Activated B cell treated with CpG ODN at 0.5 μM for 24 hours (primary cell): ENCODE measurements at regions of chr1 and their contacts with region 1.

Region 1: DNA sequence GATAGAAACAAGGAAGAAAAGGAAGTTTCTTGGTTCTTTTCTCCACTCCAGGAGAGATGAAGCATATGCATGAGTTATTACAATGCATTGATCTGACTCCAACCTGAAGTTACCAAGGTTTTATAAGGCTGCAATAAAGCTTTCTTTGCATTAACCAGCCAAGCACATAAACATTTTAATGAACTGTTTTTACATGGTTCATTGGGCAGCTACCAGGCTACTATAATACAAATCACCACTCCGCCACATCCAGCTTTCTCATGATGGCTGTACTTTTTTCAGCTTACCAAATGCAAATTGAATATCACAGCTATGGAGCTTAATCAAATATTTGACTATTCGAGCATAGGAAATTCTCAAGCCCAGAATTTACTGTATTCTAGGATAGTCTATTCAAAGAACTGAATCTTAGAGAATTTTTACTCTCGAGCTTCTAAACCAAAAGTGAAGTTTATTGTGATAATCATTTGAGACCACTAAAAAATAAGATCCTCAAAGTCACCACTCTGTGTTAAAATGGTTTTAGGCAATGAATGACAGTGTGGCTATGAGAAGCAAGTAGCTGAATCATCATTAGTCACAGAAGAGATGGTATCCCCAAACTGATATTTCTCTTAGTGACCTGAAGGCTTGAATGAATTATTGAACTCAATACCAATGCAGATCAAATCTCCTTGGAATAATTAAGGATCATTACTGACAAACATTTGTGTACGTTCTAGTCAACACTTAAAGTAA is 58.6 kb upstream of the ZNF281 start:
- DNase-seq: no peak
- ATAC-seq: no peak
- H3K4me3 Mint-ChIP-seq: no peak overlapping the region
- H3K27ac Mint-ChIP-seq: no peak overlapping the region
- H3K4me1 Mint-ChIP-seq: peaks cover 3% of the 10 kb centered on the region
- H3K27me3 Mint-ChIP-seq: no peaks in the 10 kb centered on the region
- CTCF ChIP-seq: no peak

Region 2: DNA sequence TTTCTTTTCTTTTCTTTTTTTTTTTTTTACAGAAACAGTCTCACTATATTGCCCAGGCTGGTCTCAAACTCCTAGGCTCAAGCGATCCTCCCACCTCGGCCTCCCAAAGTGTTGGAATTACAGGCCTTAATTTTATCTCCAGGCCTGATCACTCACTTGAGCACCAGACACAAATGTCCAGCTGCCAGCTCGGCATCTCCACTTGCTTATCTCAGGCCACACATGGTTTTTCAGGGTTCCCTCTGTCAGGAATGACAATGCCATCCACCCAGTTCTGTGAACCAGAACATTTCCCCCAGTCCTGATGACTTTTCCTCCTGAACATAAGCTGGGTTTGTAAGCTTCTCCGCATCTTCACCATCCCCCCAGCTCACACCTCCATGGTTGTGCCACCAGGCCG is 14.0 kb before region 1 on chr1:
- CTCF ChIA-PET with region 1: no interaction called
- POLR2A ChIA-PET with region 1: no interaction called
- intact Hi-C with region 1: loop called (anchors 2 kb)
- DNase-seq: no peak
- ATAC-seq: no peak
- H3K4me3 Mint-ChIP-seq: no peak overlapping the region
- H3K27ac Mint-ChIP-seq: no peak overlapping the region
- H3K4me1 Mint-ChIP-seq: peaks cover 26% of the 10 kb centered on the region
- H3K27me3 Mint-ChIP-seq: no peaks in the 10 kb centered on the region
- CTCF ChIP-seq: no peak